ENCODE measurements at regions of chr11 and their contacts with region 1.

Region 1: GRCh38 chr11:6419009-6419631 is at the start of gene APBB1:
- DNase-seq: peak; percentile 61 to 91 (median 74)
- ATAC-seq: peak; percentile 68
- H3K4me3 ChIP-seq: peak within 1 kb of the TSS; percentile 70
- H3K4me3 Mint-ChIP-seq: peak within 1 kb of the TSS; percentile 91
- H3K27ac ChIP-seq: peak within 1 kb of the TSS; percentile 49 to 92
- H3K27ac Mint-ChIP-seq: peak within 1 kb of the TSS; percentile 89
- H3K4me1 ChIP-seq: peaks cover 49% of the 10 kb centered on the region
- H3K4me1 Mint-ChIP-seq: peaks cover 10% of the 10 kb centered on the region
- H3K27me3 ChIP-seq: no peaks in the 10 kb centered on the region
- H3K27me3 Mint-ChIP-seq: peaks cover 7% of the 10 kb centered on the region
- CTCF ChIP-seq: no peak
- total RNA-seq, gene APBB1: 182 to 184 TPM

Region 2: GRCh38 chr11:6315811-6316425 is 103.2 kb before region 1 on chr11:
- CTCF ChIA-PET with region 1: no interaction called
- POLR2A ChIA-PET with region 1: no interaction called
- intact Hi-C with region 1: no loop called
- DNase-seq: peak in 6 of 14 experiments; percentile 2 to 58 (median 24)
- ATAC-seq: peak; percentile 48
- H3K4me3 ChIP-seq: no peak overlapping the region
- H3K4me3 Mint-ChIP-seq: no peak overlapping the region
- H3K27ac ChIP-seq: no peak overlapping the region
- H3K27ac Mint-ChIP-seq: no peak overlapping the region
- H3K4me1 ChIP-seq: peaks cover 20% of the 10 kb centered on the region
- H3K4me1 Mint-ChIP-seq: peaks cover 5% of the 10 kb centered on the region
- H3K27me3 ChIP-seq: peaks cover 37 to 46% of the 10 kb centered on the region in 2 experiments
- H3K27me3 Mint-ChIP-seq: peaks cover 59% of the 10 kb centered on the region
- CTCF ChIP-seq: peak; percentile 58

Region 3: DNA sequence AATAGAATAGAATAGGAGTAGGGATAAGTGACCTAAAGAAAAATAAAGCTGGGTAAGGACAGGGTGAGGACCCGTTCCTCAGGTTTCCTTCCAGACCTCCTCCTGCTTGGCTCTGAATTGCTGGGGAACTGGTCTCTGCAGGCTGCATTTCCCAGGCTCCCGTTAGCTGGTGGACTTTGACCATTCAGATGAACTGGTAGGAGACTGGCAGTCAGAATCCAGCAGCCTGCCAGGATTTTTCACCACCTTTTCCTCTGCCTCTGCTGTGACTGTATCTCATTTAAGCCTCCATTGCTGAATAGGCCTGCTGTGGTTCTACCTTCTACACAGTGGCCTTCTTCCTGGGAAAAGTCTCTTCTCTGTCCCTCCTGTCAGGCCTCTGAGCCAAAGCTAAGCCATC is 53.5 kb before region 1 on chr11:
- CTCF ChIA-PET with region 1: no interaction called
- POLR2A ChIA-PET with region 1: no interaction called
- intact Hi-C with region 1: no loop called
- DNase-seq: no peak
- ATAC-seq: no peak
- H3K4me3 ChIP-seq: no peak overlapping the region
- H3K4me3 Mint-ChIP-seq: no peak overlapping the region
- H3K27ac ChIP-seq: no peak overlapping the region
- H3K27ac Mint-ChIP-seq: no peak overlapping the region
- H3K4me1 ChIP-seq: no peaks in the 10 kb centered on the region
- H3K4me1 Mint-ChIP-seq: peaks cover 4% of the 10 kb centered on the region
- H3K27me3 ChIP-seq: peaks cover 0 to 2% of the 10 kb centered on the region in 2 experiments
- H3K27me3 Mint-ChIP-seq: no peaks in the 10 kb centered on the region
- CTCF ChIP-seq: no peak

Region 4: GRCh38 chr11:6443269-6444003 is 24.3 kb after region 1 on chr11:
- CTCF ChIA-PET with region 1: interaction called, 21 read pairs
- POLR2A ChIA-PET with region 1: interaction called, 7 read pairs
- intact Hi-C with region 1: loop called in 1 of 2 experiments (anchors 2 kb)
- DNase-seq: peak; percentile 37 to 82 (median 48)
- ATAC-seq: peak; percentile 91
- H3K4me3 ChIP-seq: no peak overlapping the region
- H3K4me3 Mint-ChIP-seq: no peak overlapping the region
- H3K27ac ChIP-seq: no peak overlapping the region
- H3K27ac Mint-ChIP-seq: no peak overlapping the region
- H3K4me1 ChIP-seq: peaks cover 21% of the 10 kb centered on the region
- H3K4me1 Mint-ChIP-seq: no peaks in the 10 kb centered on the region
- H3K27me3 ChIP-seq: no peaks in the 10 kb centered on the region
- H3K27me3 Mint-ChIP-seq: no peaks in the 10 kb centered on the region
- CTCF ChIP-seq: peak; percentile 89

Region 5: DNA sequence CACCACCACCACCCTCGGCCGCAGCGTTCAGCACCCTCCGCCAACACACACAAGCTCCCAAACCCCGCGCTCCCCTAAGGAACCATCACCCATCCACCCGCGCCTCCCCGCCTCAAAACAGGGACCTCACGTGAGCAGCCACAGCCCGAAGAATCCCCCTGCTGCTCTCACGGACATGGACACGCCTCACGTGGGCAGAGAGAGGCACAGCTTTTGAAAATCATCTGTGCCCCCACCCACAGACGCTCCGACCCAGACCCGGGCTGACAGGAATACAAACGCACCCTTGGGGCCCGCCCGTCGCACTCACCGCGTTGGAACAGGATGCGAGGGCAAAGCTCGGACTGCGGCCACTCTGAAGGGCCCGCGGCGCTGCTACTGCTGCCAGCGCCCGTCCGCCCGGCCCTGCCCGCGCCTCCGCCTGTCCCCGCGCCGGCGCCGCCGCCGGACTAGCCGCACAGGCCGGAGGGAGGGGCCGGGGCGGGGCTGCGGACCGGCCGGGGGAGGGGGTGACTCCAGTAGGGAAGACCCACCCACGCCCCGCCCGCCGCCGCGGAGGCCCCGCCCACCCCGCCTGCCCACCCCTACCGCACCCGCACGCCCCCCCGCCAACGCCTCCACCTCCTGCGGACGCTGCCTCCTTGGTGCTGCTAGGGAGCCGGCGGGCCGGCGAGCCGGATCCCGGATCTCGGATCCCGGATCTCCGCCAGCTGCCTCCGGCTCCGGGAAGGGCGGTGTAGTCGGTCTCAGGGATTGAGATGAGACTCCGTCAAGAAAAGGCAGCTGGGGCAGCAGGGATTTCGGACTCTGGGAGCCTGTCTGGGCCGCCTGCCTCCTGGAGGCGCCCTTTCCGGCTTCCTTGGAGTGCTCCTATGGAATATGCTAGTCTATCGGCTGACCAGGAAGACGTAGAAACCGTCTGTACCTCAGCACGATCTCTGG is 54.6 kb after region 1 on chr11 and contains the start of gene TRIM3:
- CTCF ChIA-PET with region 1: no interaction called
- POLR2A ChIA-PET with region 1: interaction called, 14 read pairs
- intact Hi-C with region 1: no loop called
- DNase-seq: peak; percentile 36 to 93 (median 69)
- ATAC-seq: peak; percentile 66
- H3K4me3 ChIP-seq: peak within 1 kb of the TSS; percentile 82
- H3K4me3 Mint-ChIP-seq: peak within 1 kb of the TSS; percentile 87
- H3K27ac ChIP-seq: peak within 1 kb of the TSS; percentile 38 to 76
- H3K27ac Mint-ChIP-seq: peak within 1 kb of the TSS; percentile 66
- H3K4me1 ChIP-seq: peaks cover 29% of the 10 kb centered on the region
- H3K4me1 Mint-ChIP-seq: peaks cover 34% of the 10 kb centered on the region
- H3K27me3 ChIP-seq: no peaks in the 10 kb centered on the region
- H3K27me3 Mint-ChIP-seq: no peaks in the 10 kb centered on the region
- CTCF ChIP-seq: no peak
- total RNA-seq, gene TRIM3: 16.4 to 16.6 TPM

Region 6: DNA sequence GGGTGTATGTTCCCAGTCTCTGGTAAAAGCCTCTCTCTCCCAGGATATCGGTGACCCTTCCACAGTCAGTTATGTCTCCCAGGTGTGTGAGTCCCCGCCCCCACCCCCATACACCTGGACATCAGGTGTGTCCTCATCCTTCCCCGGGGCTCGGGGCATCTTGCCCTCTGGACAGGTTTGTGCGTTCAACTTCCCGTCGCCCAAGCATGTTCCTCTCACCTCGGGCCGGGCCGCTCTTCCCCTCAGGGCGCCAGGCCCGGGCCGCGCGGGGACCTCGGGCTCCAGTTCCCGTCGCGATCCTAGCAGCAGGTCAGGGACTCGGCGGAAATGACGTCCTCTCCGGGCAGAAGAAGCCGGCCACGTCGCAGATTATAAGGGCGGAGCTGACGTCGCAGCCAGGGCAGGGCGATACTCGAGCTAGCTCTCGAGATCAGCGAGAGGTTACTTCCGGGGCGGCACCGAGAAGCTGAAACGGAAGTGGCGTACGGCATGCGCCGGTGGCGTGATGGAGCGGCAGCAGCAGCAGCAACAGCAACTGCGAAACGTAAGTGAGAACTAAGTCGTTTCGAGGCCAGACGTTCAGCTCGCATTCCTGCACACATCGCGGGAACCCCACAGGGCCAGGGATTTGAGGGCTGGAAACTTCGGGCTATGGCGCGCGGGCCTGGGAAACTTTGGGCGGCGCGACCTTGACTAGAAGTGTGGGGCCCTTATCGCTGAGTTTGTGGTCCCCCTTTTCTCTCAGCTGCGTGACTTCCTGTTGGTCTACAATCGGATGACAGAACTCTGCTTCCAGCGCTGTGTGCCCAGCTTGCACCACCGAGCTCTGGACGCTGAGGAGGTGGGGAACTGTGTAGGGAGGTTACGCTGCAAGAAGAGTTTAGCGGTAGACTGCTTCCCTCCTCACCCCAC is 62.1 kb after region 1 on chr11 and contains the starts of genes ARFIP2 and TIMM10B:
- CTCF ChIA-PET with region 1: no interaction called
- POLR2A ChIA-PET with region 1: interaction called, 14 read pairs
- intact Hi-C with region 1: no loop called
- DNase-seq: peak; percentile 92 to 99 (median 96)
- ATAC-seq: peak; percentile 94
- H3K4me3 ChIP-seq: peak within 1 kb of the TSS; percentile 83
- H3K4me3 Mint-ChIP-seq: peak within 1 kb of the TSS; percentile 98
- H3K27ac ChIP-seq: peak within 1 kb of the TSS; percentile 87 to 95
- H3K27ac Mint-ChIP-seq: peak within 1 kb of the TSS; percentile 99
- H3K4me1 ChIP-seq: peaks cover 39% of the 10 kb centered on the region
- H3K4me1 Mint-ChIP-seq: peaks cover 42% of the 10 kb centered on the region
- H3K27me3 ChIP-seq: no peaks in the 10 kb centered on the region
- H3K27me3 Mint-ChIP-seq: no peaks in the 10 kb centered on the region
- CTCF ChIP-seq: no peak
- total RNA-seq, gene ARFIP2: 78.1 to 80.5 TPM
- total RNA-seq, gene TIMM10B: 68.5 to 68.6 TPM

Region 7: GRCh38 chr11:6931146-6931713 is 512.1 kb after region 1 on chr11:
- CTCF ChIA-PET with region 1: no interaction called
- POLR2A ChIA-PET with region 1: no interaction called
- intact Hi-C with region 1: no loop called
- DNase-seq: no peak
- ATAC-seq: no peak
- H3K4me3 ChIP-seq: no peak overlapping the region
- H3K4me3 Mint-ChIP-seq: no peak overlapping the region
- H3K27ac ChIP-seq: no peak overlapping the region
- H3K27ac Mint-ChIP-seq: no peak overlapping the region
- H3K4me1 ChIP-seq: peaks cover 7% of the 10 kb centered on the region
- H3K4me1 Mint-ChIP-seq: peaks cover 31% of the 10 kb centered on the region
- H3K27me3 ChIP-seq: peaks cover 15 to 22% of the 10 kb centered on the region in 2 experiments
- H3K27me3 Mint-ChIP-seq: peaks cover 37% of the 10 kb centered on the region
- CTCF ChIP-seq: no peak

Measured in CD4-positive, alpha-beta T cell (primary cell).